ENCODE measurements at regions of chr12 and their contacts with region 1.

Region 1: DNA sequence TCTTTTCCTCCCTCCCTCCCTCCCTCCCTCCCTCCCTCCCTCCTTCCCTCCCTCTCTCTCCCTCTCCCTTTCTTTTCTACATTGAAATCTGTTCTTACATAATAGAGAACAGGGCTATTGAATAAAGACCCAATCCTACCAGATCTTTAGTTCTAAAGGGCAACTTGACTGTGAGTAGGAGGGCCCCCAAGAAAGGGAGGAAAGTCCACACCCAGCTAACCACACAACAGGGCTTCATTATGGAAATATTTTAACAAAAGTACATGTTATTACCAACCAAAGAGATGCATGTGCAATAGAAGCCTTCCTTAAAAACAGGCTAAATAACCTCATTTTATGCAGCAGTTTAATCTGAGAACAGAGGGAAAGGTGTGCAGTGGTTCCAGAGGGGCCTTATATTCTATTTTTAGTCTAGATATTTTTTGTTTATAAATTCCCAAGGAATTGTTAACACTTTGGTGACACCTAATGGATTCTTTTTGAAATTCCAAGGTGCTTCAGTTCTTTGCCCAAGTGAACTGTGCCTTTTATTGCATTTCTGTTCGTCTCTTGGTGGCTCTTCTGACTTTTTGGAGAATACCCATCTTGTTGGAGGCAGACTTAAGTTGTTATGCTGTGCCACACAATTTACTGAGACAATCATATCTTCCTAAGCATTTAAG is 63.0 kb downstream of the GNS start:
- DNase-seq: peak in 1 of 2 experiments; percentile 10
- H3K4me3 ChIP-seq: no peak overlapping the region
- H3K4me3 Mint-ChIP-seq: no peak overlapping the region
- H3K27ac Mint-ChIP-seq: no peak overlapping the region
- H3K4me1 ChIP-seq: 0 out of 2 replicates have a peak, but pooled peaks cover 6% of the 10 kb centered on the region
- H3K4me1 Mint-ChIP-seq: peaks cover 14% of the 10 kb centered on the region
- H3K27me3 ChIP-seq: no peaks in the 10 kb centered on the region
- H3K27me3 Mint-ChIP-seq: no peaks in the 10 kb centered on the region
- CTCF ChIP-seq: peak in 1 of 2 experiments; percentile 18

Region 2: DNA sequence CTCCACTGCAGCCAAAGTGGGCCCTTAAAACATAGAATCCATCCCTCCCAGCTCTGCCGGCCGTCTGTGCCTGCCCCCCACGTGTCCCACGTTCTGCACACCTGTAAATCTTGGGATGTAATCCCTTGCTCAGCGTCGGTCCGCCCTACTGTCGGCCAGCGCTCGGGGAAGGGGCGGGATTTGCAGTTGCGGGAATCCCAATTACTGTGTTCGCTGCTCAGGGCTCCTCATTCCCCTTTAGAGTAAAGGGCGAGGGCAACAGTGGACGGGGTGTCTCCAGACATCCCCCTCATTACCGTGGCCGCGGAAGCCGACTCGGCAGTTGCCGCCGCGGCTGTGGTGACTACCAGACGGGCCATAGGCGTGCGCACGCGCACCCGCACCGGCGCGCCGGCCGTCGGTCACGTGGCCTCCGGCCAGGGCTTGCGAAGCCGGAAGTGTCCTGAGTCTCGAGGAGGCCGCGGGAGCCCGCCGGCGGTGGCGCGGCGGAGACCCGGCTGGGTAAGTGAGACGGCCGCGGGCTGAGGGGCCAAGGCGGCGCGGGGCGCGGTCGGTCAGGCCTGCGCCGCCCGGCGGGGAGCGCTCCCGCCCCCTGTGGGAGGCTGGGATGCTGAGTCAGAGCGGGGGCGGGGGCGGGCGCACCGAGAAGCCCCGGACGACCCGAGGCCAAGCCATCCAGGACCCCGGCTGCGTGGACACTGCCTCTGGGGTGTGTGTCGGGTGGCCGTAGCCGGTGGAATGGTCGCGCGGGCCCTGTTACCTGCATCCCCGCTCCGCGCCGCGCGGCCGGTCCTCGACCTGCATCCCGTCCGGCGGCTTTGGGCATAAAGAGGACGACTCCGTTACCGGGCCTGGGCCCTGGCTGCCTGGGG is 244.3 kb before region 1 on chr12 and contains the start of gene TBK1:
- CTCF ChIA-PET with region 1: interaction called, 6 read pairs
- POLR2A ChIA-PET with region 1: no interaction called
- intact Hi-C with region 1: loop called (anchors 5 kb)
- DNase-seq: peak; percentile 91 to 94
- H3K4me3 ChIP-seq: peak within 1 kb of the TSS; percentile 98
- H3K4me3 Mint-ChIP-seq: peak within 1 kb of the TSS; percentile 83
- H3K27ac Mint-ChIP-seq: peak within 1 kb of the TSS; percentile 86
- H3K4me1 ChIP-seq: peaks cover 4% of the 10 kb centered on the region; the same call in 1 of the 2 replicates
- H3K4me1 Mint-ChIP-seq: peaks cover 15% of the 10 kb centered on the region
- H3K27me3 ChIP-seq: no peaks in the 10 kb centered on the region
- H3K27me3 Mint-ChIP-seq: no peaks in the 10 kb centered on the region
- CTCF ChIP-seq: no peak
- total RNA-seq, gene TBK1: 21.6 and 23.2 TPM in 2 replicates

Region 3: DNA sequence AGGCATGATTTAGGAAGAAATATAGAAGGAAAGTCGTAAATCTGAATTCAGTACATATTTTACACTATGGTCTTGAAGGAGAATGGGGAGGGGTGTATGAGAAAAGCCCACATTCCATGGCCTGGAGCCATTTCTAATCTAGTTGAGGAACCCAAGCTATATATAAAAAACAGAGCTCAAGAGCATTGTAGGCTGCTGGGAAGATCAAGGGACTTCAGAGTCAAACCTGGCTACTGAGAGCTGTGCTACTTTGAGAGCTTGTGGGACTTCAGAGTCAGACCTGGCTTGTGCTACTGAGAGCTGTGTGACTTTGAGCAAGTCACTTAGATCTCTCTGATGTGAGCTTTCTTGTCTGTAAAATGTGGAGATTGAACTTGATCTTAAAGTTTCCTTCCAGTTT is 185.5 kb before region 1 on chr12:
- CTCF ChIA-PET with region 1: no interaction called
- POLR2A ChIA-PET with region 1: no interaction called
- intact Hi-C with region 1: no loop called
- DNase-seq: no peak
- H3K4me3 ChIP-seq: no peak overlapping the region
- H3K4me3 Mint-ChIP-seq: no peak overlapping the region
- H3K27ac Mint-ChIP-seq: no peak overlapping the region
- H3K4me1 ChIP-seq: peaks cover 3% of the 10 kb centered on the region
- H3K4me1 Mint-ChIP-seq: no peaks in the 10 kb centered on the region
- H3K27me3 ChIP-seq: no peaks in the 10 kb centered on the region
- H3K27me3 Mint-ChIP-seq: no peaks in the 10 kb centered on the region
- CTCF ChIP-seq: no peak

Region 4: DNA sequence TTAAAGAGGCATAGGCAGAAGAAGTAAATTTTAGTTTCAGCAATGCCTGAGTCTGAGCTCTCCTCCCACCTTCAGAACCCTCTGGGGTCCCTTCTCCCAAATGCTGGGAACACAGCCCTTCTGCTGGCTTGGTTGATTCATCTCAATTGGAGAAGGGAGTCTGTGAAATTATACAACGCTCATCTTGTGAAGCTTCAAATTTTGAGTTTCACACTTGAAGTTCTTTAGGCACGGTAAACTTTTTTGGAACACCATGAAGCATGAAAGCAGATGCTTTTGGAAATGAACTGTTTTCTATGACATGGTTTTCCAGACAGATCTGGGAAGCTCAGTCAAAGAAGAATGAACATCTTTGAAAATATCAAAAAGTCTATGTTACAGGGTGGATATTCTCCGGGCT is 174.4 kb before region 1 on chr12:
- CTCF ChIA-PET with region 1: no interaction called
- POLR2A ChIA-PET with region 1: interaction called, 11 read pairs
- intact Hi-C with region 1: no loop called
- DNase-seq: no peak
- H3K4me3 ChIP-seq: no peak overlapping the region
- H3K4me3 Mint-ChIP-seq: no peak overlapping the region
- H3K27ac Mint-ChIP-seq: no peak overlapping the region
- H3K4me1 ChIP-seq: no peaks in the 10 kb centered on the region
- H3K4me1 Mint-ChIP-seq: no peaks in the 10 kb centered on the region
- H3K27me3 ChIP-seq: no peaks in the 10 kb centered on the region
- H3K27me3 Mint-ChIP-seq: no peaks in the 10 kb centered on the region
- CTCF ChIP-seq: no peak

Region 5: DNA sequence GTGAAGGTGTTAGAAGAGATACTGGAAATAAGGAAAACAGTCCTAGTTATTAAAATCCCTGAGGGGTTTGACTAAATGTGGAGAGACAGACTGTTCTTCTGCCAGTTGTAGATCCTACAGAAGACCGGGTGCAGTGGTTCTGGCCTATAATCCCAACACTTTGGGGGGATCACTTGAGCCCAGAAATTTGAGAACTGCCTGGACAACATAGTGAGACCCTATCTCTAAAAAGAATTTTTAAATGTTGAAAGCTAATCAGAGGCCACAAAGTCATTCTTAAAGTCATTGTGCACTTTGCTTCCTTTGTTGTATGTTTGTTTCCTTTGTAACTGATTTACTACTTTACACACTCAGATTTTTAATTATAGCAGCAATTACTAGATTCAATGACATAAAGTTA is 147.1 kb before region 1 on chr12:
- CTCF ChIA-PET with region 1: interaction called, 11 read pairs
- POLR2A ChIA-PET with region 1: no interaction called
- intact Hi-C with region 1: loop called (anchors 1 kb)
- DNase-seq: no peak
- H3K4me3 ChIP-seq: no peak overlapping the region
- H3K4me3 Mint-ChIP-seq: no peak overlapping the region
- H3K27ac Mint-ChIP-seq: no peak overlapping the region
- H3K4me1 ChIP-seq: no peaks in the 10 kb centered on the region
- H3K4me1 Mint-ChIP-seq: no peaks in the 10 kb centered on the region
- H3K27me3 ChIP-seq: no peaks in the 10 kb centered on the region
- H3K27me3 Mint-ChIP-seq: no peaks in the 10 kb centered on the region
- CTCF ChIP-seq: no peak

Region 6: GRCh38 chr12:64587447-64587846 is 108.8 kb before region 1 on chr12:
- CTCF ChIA-PET with region 1: no interaction called
- POLR2A ChIA-PET with region 1: no interaction called
- intact Hi-C with region 1: loop called (anchors 1 kb)
- DNase-seq: no peak
- H3K4me3 ChIP-seq: no peak overlapping the region
- H3K4me3 Mint-ChIP-seq: no peak overlapping the region
- H3K27ac Mint-ChIP-seq: no peak overlapping the region
- H3K4me1 ChIP-seq: no peaks in the 10 kb centered on the region
- H3K4me1 Mint-ChIP-seq: no peaks in the 10 kb centered on the region
- H3K27me3 ChIP-seq: no peaks in the 10 kb centered on the region
- H3K27me3 Mint-ChIP-seq: no peaks in the 10 kb centered on the region
- CTCF ChIP-seq: no peak

Region 7: DNA sequence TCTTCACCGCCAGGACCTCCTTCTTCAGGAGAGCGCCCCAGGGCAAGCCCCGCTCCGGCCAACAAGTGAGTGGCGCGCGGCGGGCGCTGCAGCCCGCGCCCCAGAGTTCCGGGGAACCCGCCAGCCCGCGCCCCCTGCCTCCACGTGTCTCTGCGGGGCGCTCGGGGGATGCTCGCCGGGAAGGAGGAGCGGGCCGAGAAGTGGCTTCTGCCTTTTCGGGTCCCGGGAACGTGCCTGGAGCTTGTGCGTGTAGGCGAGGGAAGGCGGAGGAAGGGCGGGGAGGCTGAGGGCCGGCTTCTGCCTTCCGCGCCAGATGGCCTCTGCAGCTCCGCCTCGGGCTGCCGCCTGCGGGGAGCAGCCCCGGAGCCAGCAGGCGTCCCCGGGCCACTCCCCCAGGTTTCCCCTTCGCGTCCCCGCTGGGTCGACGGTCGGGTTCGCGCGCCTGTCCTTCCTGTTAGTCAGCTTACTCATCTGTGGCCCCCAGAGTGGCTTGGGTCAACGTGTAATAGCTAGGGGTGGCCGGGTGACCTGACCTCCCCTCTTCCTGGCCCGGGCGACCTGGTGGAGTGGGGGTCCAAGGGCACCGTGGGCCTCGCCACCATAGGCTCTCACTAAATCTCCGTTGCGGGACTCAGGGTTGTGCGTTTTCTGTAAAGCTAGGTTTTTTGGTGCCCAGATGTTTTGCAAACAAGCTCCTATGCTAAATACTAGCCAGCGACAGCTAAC is 85.4 kb before region 1 on chr12:
- CTCF ChIA-PET with region 1: interaction called, 9 read pairs
- POLR2A ChIA-PET with region 1: no interaction called
- intact Hi-C with region 1: loop called (anchors 2 kb)
- DNase-seq: peak; percentile 67 to 69
- H3K4me3 ChIP-seq: peak overlapping the region; percentile 95
- H3K4me3 Mint-ChIP-seq: peak overlapping the region; percentile 80
- H3K27ac Mint-ChIP-seq: peak overlapping the region; percentile 39
- H3K4me1 ChIP-seq: peaks cover 5% of the 10 kb centered on the region; the same call in 1 of the 2 replicates
- H3K4me1 Mint-ChIP-seq: peaks cover 7% of the 10 kb centered on the region
- H3K27me3 ChIP-seq: no peaks in the 10 kb centered on the region
- H3K27me3 Mint-ChIP-seq: no peaks in the 10 kb centered on the region
- CTCF ChIP-seq: no peak

Region 8: GRCh38 chr12:64625243-64626077 is 70.8 kb before region 1 on chr12:
- CTCF ChIA-PET with region 1: interaction called, 8 read pairs
- POLR2A ChIA-PET with region 1: no interaction called
- intact Hi-C with region 1: loop called (anchors 1 kb)
- DNase-seq: peak; percentile 58 to 70
- H3K4me3 ChIP-seq: peak overlapping the region; percentile 13
- H3K4me3 Mint-ChIP-seq: peak overlapping the region; percentile 68
- H3K27ac Mint-ChIP-seq: peak overlapping the region; percentile 82
- H3K4me1 ChIP-seq: peaks cover 19% of the 10 kb centered on the region
- H3K4me1 Mint-ChIP-seq: peaks cover 15% of the 10 kb centered on the region
- H3K27me3 ChIP-seq: no peaks in the 10 kb centered on the region
- H3K27me3 Mint-ChIP-seq: no peaks in the 10 kb centered on the region
- CTCF ChIP-seq: no peak

Region 9: GRCh38 chr12:64716371-64716770 is 20.2 kb after region 1 on chr12:
- CTCF ChIA-PET with region 1: no interaction called
- POLR2A ChIA-PET with region 1: no interaction called
- intact Hi-C with region 1: no loop called
- DNase-seq: no peak
- H3K4me3 ChIP-seq: no peak overlapping the region
- H3K4me3 Mint-ChIP-seq: no peak overlapping the region
- H3K27ac Mint-ChIP-seq: no peak overlapping the region
- H3K4me1 ChIP-seq: no peaks in the 10 kb centered on the region
- H3K4me1 Mint-ChIP-seq: no peaks in the 10 kb centered on the region
- H3K27me3 ChIP-seq: no peaks in the 10 kb centered on the region
- H3K27me3 Mint-ChIP-seq: no peaks in the 10 kb centered on the region
- CTCF ChIP-seq: no peak

Measured in Caco-2 (cell line).